ENCODE measurements at regions of chr12 and their contacts with region 1.

Region 1: DNA sequence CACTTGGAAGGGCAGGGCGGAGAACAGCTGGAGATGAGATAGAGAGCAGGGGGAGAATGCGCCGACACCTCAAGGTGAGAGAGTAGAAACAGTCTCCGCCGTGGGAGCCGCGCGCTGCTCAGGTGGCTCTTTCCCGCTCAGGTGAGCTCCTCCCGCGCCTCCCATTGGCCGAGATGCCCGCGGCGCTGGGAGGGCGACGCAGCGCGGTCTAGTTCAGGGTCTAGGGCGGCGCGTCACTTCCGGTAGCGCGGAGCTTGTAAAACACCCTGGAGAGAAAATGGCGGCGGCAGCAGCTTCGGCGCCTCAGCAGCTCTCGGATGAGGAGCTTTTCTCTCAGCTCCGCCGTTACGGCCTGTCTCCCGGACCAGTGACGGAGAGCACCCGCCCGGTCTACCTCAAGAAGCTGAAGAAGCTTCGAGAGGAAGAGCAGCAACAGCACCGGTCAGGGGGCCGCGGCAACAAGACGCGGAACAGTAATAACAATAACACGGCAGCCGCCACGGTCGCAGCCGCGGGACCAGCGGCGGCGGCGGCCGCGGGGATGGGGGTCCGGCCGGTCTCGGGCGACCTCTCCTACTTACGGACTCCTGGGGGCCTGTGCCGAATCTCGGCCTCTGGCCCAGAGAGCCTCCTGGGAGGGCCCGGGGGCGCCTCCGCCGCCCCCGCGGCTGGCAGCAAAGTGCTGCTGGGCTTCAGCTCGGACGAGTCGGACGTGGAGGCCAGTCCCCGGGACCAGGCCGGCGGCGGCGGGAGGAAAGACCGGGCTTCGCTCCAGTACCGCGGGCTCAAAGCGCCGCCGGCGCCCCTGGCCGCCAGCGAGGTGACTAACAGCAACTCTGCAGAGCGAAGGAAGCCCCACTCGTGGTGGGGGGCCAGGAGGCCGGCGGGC is at the start of gene LEMD3:
- DNase-seq: peak; percentile 89 to 94
- H3K4me3 ChIP-seq: peak within 1 kb of the TSS; percentile 98
- H3K27ac ChIP-seq: peak within 1 kb of the TSS; percentile 70
- H3K4me1 ChIP-seq: peaks cover 44% of the 10 kb centered on the region
- H3K27me3 ChIP-seq: no peaks in the 10 kb centered on the region
- CTCF ChIP-seq: no peak
- total RNA-seq, gene LEMD3: 17.8 and 24.4 TPM in 2 replicates

Region 2: DNA sequence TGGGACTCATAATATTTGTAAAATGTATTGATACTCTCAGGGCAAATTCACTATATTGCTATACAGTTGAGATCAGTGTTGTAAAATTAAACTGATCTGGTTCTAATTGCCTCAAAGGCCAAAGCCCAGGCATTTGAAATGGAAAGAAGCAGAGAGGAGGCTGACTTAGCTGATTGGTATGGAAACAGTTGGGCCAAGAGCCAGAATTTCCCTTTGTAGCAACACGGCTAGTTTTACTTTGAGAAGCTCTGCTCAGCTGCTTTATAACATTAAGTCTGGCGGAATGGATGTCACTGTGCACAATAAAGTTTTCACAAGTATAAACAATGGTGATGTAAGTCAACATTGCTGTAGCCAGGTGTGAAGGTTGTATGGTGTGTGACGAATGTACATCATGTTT is 295.4 kb after region 1 on chr12:
- CTCF ChIA-PET with region 1: no interaction called
- POLR2A ChIA-PET with region 1: no interaction called
- intact Hi-C with region 1: no loop called
- DNase-seq: no peak
- H3K4me3 ChIP-seq: no peak overlapping the region
- H3K27ac ChIP-seq: no peak overlapping the region
- H3K4me1 ChIP-seq: no peaks in the 10 kb centered on the region
- H3K27me3 ChIP-seq: no peaks in the 10 kb centered on the region
- CTCF ChIP-seq: no peak

Region 3: GRCh38 chr12:65565601-65566560 is 396.3 kb after region 1 on chr12:
- CTCF ChIA-PET with region 1: interaction called, 17 read pairs
- POLR2A ChIA-PET with region 1: no interaction called
- intact Hi-C with region 1: no loop called
- DNase-seq: no peak
- H3K4me3 ChIP-seq: no peak overlapping the region
- H3K27ac ChIP-seq: no peak overlapping the region
- H3K4me1 ChIP-seq: peaks cover 8% of the 10 kb centered on the region; the same call in 1 of the 2 replicates
- H3K27me3 ChIP-seq: no peaks in the 10 kb centered on the region
- CTCF ChIP-seq: no peak

Region 4: DNA sequence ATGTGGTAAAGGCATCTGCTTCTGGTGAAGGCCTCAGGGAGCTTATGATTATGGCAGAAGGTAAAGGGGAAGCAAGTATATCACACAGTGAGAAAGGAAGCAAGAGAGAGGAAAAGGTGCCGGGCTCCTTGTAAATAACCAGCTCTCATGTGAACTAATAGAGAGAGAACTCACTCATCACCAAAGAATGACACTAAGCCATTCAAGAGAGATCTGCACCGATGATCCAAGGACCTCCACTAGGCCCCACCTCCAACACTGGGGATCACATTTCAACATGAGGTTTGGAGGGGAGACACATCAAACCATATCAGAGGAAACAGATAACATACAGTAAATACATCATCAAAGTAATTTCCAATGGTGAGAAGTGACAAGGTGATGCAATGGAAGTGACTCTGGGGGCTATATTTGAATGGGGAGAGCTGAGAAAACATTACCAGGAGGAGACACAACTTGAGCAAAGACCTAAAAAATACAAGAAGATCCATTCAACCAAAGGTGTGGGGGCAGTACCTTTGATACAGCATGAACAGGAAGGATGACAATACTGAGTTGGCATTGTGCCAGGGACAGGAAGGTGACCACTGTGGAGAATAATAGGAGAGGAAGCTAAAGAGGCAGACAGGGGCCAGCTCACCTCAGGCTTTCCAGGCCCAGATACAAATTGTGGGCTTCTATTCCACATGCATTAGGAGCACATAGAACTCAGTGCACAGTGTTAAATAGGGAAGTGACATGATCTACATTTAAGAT is 1643.8 kb after region 1 on chr12:
- CTCF ChIA-PET with region 1: no interaction called
- POLR2A ChIA-PET with region 1: no interaction called
- intact Hi-C with region 1: no loop called
- DNase-seq: peak in 1 of 2 experiments; percentile 14
- H3K4me3 ChIP-seq: no peak overlapping the region
- H3K27ac ChIP-seq: no peak overlapping the region
- H3K4me1 ChIP-seq: peaks cover 6% of the 10 kb centered on the region; the same call in 1 of the 2 replicates
- H3K27me3 ChIP-seq: no peaks in the 10 kb centered on the region
- CTCF ChIP-seq: no peak

Measured in PC-9 (cell line).